ENCODE measurements at regions of chr19 and their contacts with region 1.

Region 1: GRCh38 chr19:41746593-41747227 is 8.6 kb upstream of the CEACAM6 start:
- DNase-seq: peak in 2 of 5 donors; percentile 20 to 50
- ATAC-seq: peak in 2 of 4 donors; percentile 74 to 78
- H3K4me3 ChIP-seq: no peak overlapping the region
- H3K27ac ChIP-seq: no peak overlapping the region
- H3K4me1 ChIP-seq: no peaks in the 10 kb centered on the region
- H3K27me3 ChIP-seq: peaks cover 0 to 56% (median 9%) of the 10 kb centered on the region in 9 donors
- CTCF ChIP-seq: peak in 11 of 12 donors; percentile 13 to 51 (median 35)
- POLR2A ChIP-seq: no peak

Region 2: GRCh38 chr19:41641879-41642485 is 104.7 kb before region 1 on chr19:
- intact Hi-C with region 1: loop called in 9 of 10 experiments (anchors 2 to 10 kb)
- DNase-seq: peak in 3 of 5 donors; percentile 25 to 50 (median 43)
- ATAC-seq: peak in 2 of 4 donors; percentile 57 to 75
- H3K4me3 ChIP-seq: no peak overlapping the region
- H3K27ac ChIP-seq: no peak overlapping the region
- H3K4me1 ChIP-seq: peaks cover 0 to 9% (median 0%) of the 10 kb centered on the region in 12 donors
- H3K27me3 ChIP-seq: peaks cover 0 to 43% (median 8%) of the 10 kb centered on the region in 9 donors
- CTCF ChIP-seq: peak; percentile 64 to 89 (median 80)
- POLR2A ChIP-seq: no peak

Measured in heart left ventricle (tissue), 16 donors.